A673 (cell line): ENCODE measurements at regions of chr13 and their contacts with region 1.

Region 1: DNA sequence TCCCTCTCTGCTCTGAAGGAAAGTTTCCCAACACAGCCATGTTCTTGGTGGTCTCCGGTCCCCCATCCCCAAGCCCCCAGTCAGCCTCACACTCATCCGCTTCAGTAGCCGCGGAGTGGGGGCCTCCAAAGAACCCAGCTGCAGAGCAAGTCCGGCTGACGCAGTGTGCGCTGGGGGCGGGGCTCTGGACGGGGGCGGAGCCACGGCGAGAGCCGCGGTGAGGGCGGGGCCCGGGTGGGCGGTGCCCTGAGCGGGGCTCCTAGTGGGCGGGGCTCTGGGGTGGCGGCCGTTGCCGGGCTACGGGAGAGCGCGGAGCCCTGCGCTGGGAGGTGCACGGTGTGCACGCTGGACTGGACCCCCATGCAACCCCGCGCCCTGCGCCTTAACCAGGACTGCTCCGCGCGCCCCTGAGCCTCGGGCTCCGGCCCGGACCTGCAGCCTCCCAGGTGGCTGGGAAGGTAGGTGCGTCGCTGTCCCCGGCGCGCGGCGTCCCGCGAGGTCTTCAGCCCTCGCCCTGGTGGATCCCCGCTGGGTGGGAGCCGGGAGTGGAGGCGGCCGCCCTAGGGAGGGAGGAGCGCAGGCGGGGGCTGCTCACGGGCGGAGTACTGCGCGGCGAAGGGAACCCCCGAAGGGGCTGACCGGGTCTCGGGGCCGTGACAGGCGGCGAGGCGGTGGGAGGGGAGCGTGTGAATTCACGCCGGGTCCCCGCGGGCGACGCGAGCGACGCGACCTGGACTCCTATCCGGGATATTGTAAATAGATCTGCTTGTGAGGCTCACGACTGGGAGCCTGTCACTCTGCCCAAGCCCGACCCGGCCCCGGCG is 9.1 kb downstream of the TNFRSF19 start:
- DNase-seq: peak; percentile 85
- H3K4me3 ChIP-seq: peak overlapping the region; percentile 60
- H3K27ac ChIP-seq: no peak overlapping the region
- H3K4me1 ChIP-seq: no peaks in the 10 kb centered on the region
- H3K27me3 ChIP-seq: peaks cover 55% of the 10 kb centered on the region
- CTCF ChIP-seq: no peak

Region 2: DNA sequence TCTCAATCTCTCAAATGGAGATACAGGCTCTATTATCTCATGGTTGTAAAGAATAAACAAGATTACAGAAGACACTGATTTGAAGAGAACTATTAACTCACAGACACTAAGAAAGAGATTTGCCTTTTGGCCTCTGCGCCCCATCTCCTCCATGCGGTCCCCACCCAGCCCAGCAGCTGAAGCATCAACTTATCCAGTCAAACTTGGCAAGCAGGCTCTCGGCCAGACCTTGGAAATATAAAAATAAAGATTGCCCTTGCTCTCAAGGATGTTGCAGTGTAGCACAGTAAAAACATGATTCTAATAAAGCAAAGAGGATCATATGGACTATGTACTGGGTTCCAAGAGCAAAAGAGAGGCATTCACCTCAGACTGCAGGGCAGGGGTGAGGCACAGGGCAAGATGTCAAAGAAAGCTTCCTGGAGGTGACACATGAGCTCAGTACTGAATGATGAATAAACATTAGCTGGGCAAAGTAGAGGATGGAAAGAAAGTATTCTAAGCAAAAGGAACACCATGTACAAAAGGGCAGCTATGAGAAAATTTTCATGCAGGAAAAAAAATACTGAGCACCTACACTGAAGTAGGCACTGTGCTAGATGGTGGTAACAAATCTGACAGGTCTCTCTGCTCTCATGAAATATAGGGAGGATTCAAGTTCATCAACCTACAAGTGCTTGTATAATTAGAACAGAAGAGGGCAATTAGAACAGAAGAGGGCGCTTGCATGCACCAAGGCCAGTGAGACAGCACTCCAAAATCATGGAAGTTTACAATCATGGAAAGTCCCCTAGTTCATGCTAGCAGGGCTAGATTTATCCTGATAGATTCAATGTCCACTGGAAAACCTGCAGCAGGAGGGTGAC is 230.8 kb before region 1 on chr13:
- CTCF ChIA-PET with region 1: no interaction called
- POLR2A ChIA-PET with region 1: no interaction called
- intact Hi-C with region 1: no loop called
- DNase-seq: no peak
- H3K4me3 ChIP-seq: no peak overlapping the region
- H3K27ac ChIP-seq: no peak overlapping the region
- H3K4me1 ChIP-seq: no peaks in the 10 kb centered on the region
- H3K27me3 ChIP-seq: no peaks in the 10 kb centered on the region
- CTCF ChIP-seq: no peak

Region 3: DNA sequence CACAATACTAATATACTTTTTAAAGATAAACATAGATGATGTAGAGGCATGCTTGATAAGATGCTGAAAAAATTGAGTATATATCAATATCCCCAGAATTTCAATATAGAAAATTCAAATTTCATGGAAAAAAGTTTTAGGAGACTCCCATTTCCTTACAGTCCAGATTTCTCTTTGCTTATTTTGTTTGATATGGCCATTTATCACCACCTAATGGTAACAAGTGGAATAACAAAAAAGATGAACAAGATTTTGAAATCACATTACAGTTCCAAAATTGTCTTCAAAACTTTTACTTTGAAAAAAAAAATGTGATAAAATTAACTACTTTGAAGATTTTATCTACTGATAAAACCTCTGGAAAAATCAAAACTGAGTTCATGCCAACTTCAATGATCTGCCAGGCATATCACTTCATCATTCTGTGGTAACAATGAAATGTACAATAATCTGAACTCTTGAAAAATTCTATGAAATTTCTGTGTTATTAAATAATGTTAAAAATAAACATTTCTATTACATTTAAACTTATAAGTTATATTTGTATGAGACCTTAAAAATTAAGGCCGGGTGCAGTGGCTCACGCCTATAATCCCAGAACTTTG is 292.4 kb after region 1 on chr13:
- CTCF ChIA-PET with region 1: no interaction called
- POLR2A ChIA-PET with region 1: no interaction called
- intact Hi-C with region 1: loop called (anchors 10 kb)
- DNase-seq: peak; percentile 55
- H3K4me3 ChIP-seq: no peak overlapping the region
- H3K27ac ChIP-seq: no peak overlapping the region
- H3K4me1 ChIP-seq: no peaks in the 10 kb centered on the region
- H3K27me3 ChIP-seq: no peaks in the 10 kb centered on the region
- CTCF ChIP-seq: peak; percentile 61